ENCODE measurements at regions of chr9 and their contacts with region 1.

Region 1: GRCh38 chr9:68690088-68690487 is 15.0 kb upstream of the PIP5K1B start:
- DNase-seq: no peak
- H3K4me3 ChIP-seq: no peak overlapping the region
- H3K4me3 Mint-ChIP-seq: no peak overlapping the region
- H3K27ac Mint-ChIP-seq: no peak overlapping the region
- H3K4me1 ChIP-seq: no peaks in the 10 kb centered on the region
- H3K4me1 Mint-ChIP-seq: no peaks in the 10 kb centered on the region
- H3K27me3 ChIP-seq: no peaks in the 10 kb centered on the region
- H3K27me3 Mint-ChIP-seq: no peaks in the 10 kb centered on the region
- CTCF ChIP-seq: no peak

Region 2: DNA sequence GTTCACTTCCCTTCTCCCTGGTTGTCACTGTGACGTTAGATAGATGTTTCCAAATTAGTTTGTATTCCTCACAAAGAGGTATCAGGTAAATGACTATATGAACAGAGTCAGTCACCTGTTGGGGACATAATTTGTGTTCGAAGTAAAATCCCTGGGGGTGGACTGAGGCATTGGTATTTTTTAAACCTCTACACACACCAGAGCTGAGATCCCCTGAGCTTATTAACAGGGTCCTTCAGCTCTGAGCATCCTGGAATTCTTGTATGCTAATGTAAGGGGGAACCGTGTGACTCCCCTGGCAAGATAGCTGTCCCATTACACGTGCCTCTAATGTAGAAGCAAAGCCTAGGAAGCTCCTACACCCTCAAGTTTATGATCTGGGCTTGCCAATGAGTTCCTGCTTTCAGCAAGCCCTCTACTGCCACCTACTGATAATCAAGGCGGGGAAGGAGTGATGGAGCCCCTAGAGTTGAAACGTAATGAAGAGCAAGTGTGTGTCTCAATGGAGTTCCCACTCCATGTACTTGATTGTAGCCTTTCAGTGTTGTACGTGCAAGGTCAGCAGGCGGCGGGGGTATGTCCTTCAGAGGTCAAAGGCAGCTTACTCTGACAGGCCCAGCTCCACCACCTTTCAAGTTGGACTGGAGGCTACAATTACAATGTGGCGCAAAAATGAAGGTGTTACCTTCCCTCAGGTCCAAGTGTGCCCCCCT is 309.5 kb after region 1 on chr9:
- CTCF ChIA-PET with region 1: no interaction called
- POLR2A ChIA-PET with region 1: no interaction called
- intact Hi-C with region 1: loop called (anchors 10 kb)
- DNase-seq: peak; percentile 23 to 48
- H3K4me3 ChIP-seq: no peak overlapping the region
- H3K4me3 Mint-ChIP-seq: no peak overlapping the region
- H3K27ac Mint-ChIP-seq: no peak overlapping the region
- H3K4me1 ChIP-seq: no peaks in the 10 kb centered on the region
- H3K4me1 Mint-ChIP-seq: no peaks in the 10 kb centered on the region
- H3K27me3 ChIP-seq: no peaks in the 10 kb centered on the region
- H3K27me3 Mint-ChIP-seq: no peaks in the 10 kb centered on the region
- CTCF ChIP-seq: peak; percentile 4 to 36